ENCODE measurements at regions of chr1 and their contacts with region 1.

Region 1: GRCh38 chr1:171226747-171227370 is 21.4 kb upstream of the FMO1 start:
- DNase-seq: no peak
- H3K4me3 ChIP-seq: no peak overlapping the region
- H3K27ac ChIP-seq: peak overlapping the region in 1 of 2 donors; percentile 18
- H3K4me1 ChIP-seq: peaks cover 0 to 14% of the 10 kb centered on the region in 2 donors
- H3K27me3 ChIP-seq: no peaks in the 10 kb centered on the region
- CTCF ChIP-seq: peak; percentile 88 to 96 (median 95)
- POLR2A ChIP-seq: no peak

Region 2: DNA sequence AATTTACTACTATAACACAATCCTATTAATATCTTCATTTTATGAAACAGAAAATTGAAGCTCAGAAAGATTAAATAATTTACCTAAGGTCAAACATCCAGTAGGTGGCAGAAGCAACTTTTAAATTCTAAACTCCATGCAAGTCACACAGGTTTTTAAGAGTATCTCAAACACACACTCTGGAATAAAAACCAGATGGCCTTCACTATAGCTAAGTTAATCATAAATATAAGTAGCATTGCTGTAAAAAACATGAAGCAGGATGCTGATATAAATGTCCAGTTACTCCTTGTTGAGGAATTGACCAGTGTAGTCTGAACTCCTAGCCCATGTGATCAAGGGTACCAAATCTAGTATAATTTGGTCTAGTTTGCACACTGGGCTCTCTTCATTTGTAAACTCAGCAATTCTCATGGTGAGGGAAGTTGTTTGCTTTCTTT is 145.5 kb before region 1 on chr1:
- intact Hi-C with region 1: loop called (anchors 10 kb)
- DNase-seq: no peak
- H3K4me3 ChIP-seq: no peak overlapping the region
- H3K27ac ChIP-seq: peak overlapping the region; percentile 58 to 69
- H3K4me1 ChIP-seq: no peaks in the 10 kb centered on the region
- H3K27me3 ChIP-seq: no peaks in the 10 kb centered on the region
- CTCF ChIP-seq: peak; percentile 47 to 67 (median 52)
- POLR2A ChIP-seq: no peak

Measured in breast epithelium (tissue), 4 donors.